ENCODE measurements at regions of chr15 and their contacts with region 1.

Region 1: GRCh38 chr15:48877630-48878595 is at the start of gene EID1:
- DNase-seq: peak; percentile 89 to 91
- H3K4me3 ChIP-seq: peak within 1 kb of the TSS; percentile 73
- H3K4me3 Mint-ChIP-seq: peak within 1 kb of the TSS; percentile 99
- H3K27ac Mint-ChIP-seq: peak within 1 kb of the TSS; percentile 95
- H3K4me1 ChIP-seq: peaks cover 12% of the 10 kb centered on the region
- H3K4me1 Mint-ChIP-seq: peaks cover 17% of the 10 kb centered on the region
- H3K27me3 ChIP-seq: no peaks in the 10 kb centered on the region
- H3K27me3 Mint-ChIP-seq: peaks cover 8% of the 10 kb centered on the region
- CTCF ChIP-seq: no peak
- total RNA-seq, gene EID1: 60.6 and 63.6 TPM in 2 replicates

Region 2: DNA sequence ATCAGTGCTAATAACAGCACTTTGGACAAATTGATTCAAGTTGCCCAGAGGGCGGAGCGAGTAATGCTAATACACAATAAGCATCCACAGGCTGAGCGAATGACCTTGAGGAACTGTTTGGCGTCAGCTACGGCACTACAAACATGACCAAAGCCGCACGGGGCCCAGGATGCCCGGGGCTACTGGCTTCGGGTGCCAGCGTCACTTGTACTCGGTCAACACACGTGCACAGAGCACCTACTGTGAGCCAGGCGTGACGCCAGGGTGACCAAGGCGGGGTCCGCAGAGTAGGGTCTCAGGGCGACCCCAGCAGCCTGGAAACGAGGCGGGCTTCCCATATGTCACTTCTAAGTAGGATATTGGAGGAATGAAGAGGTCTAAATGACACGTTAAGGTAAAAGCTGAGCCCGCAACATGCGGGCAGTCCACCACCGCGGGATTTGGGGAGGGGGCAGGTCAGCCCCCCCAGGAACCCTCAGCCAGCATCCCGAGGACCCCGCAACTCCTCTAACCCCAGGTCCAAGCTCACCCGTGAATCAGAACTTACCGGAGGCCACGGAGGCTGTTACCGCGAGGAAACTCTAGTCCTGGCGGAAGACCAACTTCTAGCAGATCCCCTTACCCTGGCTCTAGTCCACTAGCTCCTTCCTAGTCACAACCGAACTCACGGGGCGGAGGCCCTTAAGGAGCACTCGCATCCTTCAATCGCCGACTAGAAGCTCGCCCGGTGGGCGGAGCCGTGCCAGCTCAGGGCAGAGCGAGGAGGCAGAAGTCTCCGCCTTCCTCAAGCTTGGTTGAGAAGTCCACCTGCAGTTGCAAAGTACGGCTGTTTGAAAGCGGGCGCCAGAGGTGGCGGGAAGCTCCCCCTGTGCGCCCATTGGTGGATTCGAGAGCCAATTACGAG is 67.2 kb before region 1 on chr15 and contains the start of gene CEP152:
- CTCF ChIA-PET with region 1: no interaction called
- POLR2A ChIA-PET with region 1: interaction called, 5 read pairs
- intact Hi-C with region 1: loop called (anchors 1 kb)
- DNase-seq: peak; percentile 98 to 99
- H3K4me3 ChIP-seq: peak within 1 kb of the TSS; percentile 69
- H3K4me3 Mint-ChIP-seq: peak within 1 kb of the TSS; percentile 80
- H3K27ac Mint-ChIP-seq: peak within 1 kb of the TSS; percentile 96
- H3K4me1 ChIP-seq: 0 out of 2 replicates have a peak, but pooled peaks cover 6% of the 10 kb centered on the region
- H3K4me1 Mint-ChIP-seq: peaks cover 19% of the 10 kb centered on the region
- H3K27me3 ChIP-seq: no peaks in the 10 kb centered on the region
- H3K27me3 Mint-ChIP-seq: peaks cover 3% of the 10 kb centered on the region
- CTCF ChIP-seq: no peak
- total RNA-seq, gene CEP152: 14.2 and 16.5 TPM in 2 replicates

Region 3: DNA sequence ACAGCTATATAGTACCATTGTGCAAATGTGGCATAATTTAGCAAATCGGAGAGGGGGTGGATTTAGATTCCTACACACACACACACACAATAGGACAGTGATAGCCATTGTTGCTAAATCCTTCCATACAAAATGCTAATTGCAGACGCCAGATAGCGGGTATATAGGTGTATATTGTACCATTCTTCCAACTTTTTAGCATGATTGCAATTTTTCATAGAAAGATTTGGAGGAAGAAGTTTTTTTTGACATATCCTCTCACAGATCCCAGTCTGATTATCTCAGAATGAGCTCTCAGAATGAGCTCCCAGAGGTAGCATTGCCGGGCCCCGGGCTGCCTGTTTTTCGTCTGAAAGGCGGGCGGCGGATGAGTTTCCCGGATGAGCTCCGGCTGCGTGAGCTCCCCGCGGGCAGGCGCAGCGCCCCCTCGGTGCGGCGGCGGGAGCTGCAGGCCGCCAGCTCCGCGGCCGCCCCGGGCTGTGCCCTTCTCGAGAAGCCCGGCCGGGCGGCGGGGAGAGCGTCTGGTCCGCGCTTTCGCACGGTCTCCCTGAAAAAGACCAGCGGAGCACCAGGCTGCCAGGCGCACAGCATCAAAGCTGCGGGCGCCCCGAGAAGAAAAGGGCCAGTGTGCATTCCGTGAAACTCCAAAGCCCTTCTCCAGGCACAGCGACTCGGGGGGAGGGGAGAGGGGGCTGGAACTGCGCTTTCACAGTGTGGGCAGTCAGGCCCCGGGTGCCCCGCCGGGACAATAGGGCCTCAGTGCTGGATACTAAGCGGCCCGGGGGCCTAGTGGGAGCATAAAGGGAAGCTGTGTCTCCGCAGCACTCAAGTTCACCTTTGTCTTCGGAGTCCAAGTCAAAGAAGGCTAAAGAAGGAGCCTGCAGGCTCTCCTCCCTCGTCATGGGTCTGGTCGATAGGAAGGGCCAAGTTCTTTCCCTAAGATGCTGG is 97.8 kb after region 1 on chr15:
- CTCF ChIA-PET with region 1: interaction called, 21 read pairs
- POLR2A ChIA-PET with region 1: interaction called, 4 read pairs
- intact Hi-C with region 1: no loop called
- DNase-seq: peak; percentile 74 to 87
- H3K4me3 ChIP-seq: peak overlapping the region; percentile 50
- H3K4me3 Mint-ChIP-seq: peak overlapping the region; percentile 60
- H3K27ac Mint-ChIP-seq: no peak overlapping the region
- H3K4me1 ChIP-seq: peaks cover 11% of the 10 kb centered on the region
- H3K4me1 Mint-ChIP-seq: peaks cover 10% of the 10 kb centered on the region
- H3K27me3 ChIP-seq: no peaks in the 10 kb centered on the region
- H3K27me3 Mint-ChIP-seq: peaks cover 4% of the 10 kb centered on the region
- CTCF ChIP-seq: peak; percentile 59 to 89

Region 4: GRCh38 chr15:49155110-49155833 is 277.4 kb after region 1 on chr15 and contains the start of gene COPS2:
- CTCF ChIA-PET with region 1: no interaction called
- POLR2A ChIA-PET with region 1: no interaction called
- intact Hi-C with region 1: loop called (anchors 5 kb)
- DNase-seq: peak; percentile 94 to 95
- H3K4me3 ChIP-seq: peak within 1 kb of the TSS; percentile 98
- H3K4me3 Mint-ChIP-seq: peak within 1 kb of the TSS; percentile 99
- H3K27ac Mint-ChIP-seq: peak within 1 kb of the TSS; percentile 97
- H3K4me1 ChIP-seq: no peaks in the 10 kb centered on the region
- H3K4me1 Mint-ChIP-seq: peaks cover 7% of the 10 kb centered on the region
- H3K27me3 ChIP-seq: no peaks in the 10 kb centered on the region
- H3K27me3 Mint-ChIP-seq: no peaks in the 10 kb centered on the region
- CTCF ChIP-seq: no peak
- total RNA-seq, gene COPS2: 83.8 and 85.4 TPM in 2 replicates

Measured in Caco-2 (cell line).